GM12878 (cell line): ENCODE measurements at regions of chr5 and their contacts with region 1.

Region 1: DNA sequence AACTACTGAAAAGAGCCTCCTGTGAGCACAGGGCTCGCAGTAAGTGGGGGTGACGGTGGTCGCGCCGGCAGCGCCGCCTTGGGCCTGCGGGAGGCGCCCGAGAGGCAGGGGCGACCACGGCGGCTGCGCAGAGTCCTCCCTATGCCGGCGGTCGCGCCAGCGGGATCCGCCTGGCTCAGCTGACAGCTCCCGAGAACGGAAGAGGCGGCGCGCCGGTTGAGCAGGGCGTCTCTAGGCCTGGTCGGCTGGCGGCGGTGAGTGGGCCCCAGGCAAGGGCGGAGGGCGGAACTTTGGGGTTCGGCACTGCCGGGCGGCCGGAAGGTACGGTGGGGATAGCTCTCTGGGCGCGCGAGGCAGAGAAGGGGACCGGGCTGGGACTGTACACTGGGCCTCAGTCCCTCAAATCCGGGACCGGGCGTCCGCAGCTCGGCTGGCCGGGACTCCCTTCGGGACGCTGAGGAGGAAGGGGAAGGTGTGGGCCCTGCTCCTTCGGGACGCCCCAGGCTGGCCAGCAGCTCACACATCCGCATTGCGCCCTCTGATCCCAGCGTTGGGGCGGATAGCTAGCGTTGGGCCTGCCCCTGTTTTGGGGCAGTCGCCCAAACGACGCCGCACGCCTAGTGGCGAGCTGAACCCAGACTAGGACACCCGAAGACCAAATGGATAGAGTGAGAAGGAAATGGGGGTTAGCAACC is at the start of gene RNF14:
- DNase-seq: peak; percentile 74
- ATAC-seq: peak; percentile 95
- H3K4me3 ChIP-seq: peak within 1 kb of the TSS; percentile 73
- H3K27ac ChIP-seq: peak within 1 kb of the TSS; percentile 96
- H3K4me1 ChIP-seq: peaks cover 8% of the 10 kb centered on the region
- H3K27me3 ChIP-seq: no peaks in the 10 kb centered on the region
- CTCF ChIP-seq: peak; percentile 84 to 98 (median 95)
- EP300 ChIP-seq: no peak
- POLR2A ChIP-seq: peak; percentile 97
- RAD21 ChIP-seq: no peak
- polyA plus RNA-seq, gene RNF14: 28.1 to 34.4 TPM

Region 2: DNA sequence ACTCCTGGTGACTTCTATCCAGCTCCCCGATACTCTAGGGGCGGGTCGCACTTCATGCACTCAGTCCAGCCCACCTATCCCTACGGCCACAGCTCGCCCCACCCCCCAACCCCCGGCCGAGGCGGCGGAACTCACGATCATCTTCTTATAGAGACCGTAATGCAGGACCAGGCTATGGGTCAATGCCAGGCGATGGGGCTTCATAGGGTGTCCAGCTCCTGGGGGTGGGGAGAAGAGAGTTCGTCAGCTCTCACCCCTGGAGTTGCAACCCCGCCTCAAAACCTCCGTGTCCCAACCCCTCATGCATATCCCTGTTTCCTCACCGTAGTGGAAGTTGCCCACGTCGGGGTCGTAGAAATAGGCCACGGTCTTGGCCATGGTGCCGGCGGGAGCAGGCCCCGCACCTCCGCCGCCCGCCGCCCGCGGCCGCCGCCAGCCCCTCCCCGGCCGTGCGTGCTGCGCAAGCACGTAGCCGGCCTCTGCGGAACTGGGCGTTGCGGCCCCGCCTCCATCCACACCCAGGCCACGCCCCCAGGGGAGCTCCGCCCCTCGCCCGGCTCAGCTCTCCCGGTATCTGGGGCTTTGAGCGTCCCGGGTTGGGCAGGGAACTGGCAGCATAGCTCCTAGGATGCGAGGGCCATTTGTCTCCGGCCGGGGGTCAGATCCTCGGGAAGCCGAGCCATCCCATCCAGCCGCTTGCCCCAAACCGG is 332.5 kb before region 1 on chr5 and contains the starts of genes HDAC3 and RELL2:
- CTCF ChIA-PET with region 1: interaction called, 5 read pairs
- POLR2A ChIA-PET with region 1: interaction called, 10 read pairs
- RAD21 ChIA-PET with region 1: interaction called, 6 read pairs
- SMC1A ChIA-PET with region 1: no interaction called
- in situ Hi-C with region 1: no loop called
- intact Hi-C with region 1: no loop called
- DNase-seq: no peak
- ATAC-seq: peak; percentile 86
- H3K4me3 ChIP-seq: peak within 1 kb of the TSS; percentile 85
- H3K27ac ChIP-seq: peak within 1 kb of the TSS; percentile 86
- H3K4me1 ChIP-seq: peaks cover 41% of the 10 kb centered on the region
- H3K27me3 ChIP-seq: no peaks in the 10 kb centered on the region
- CTCF ChIP-seq: no peak
- EP300 ChIP-seq: no peak
- POLR2A ChIP-seq: peak; percentile 72
- RAD21 ChIP-seq: no peak
- polyA plus RNA-seq, gene HDAC3: 62.2 to 108 TPM
- polyA plus RNA-seq, gene RELL2: 0.23 to 0.64 TPM

Region 3: GRCh38 chr5:141664732-141665461 is 304.2 kb before region 1 on chr5:
- CTCF ChIA-PET with region 1: interaction called, 12 read pairs
- POLR2A ChIA-PET with region 1: no interaction called
- RAD21 ChIA-PET with region 1: no interaction called
- SMC1A ChIA-PET with region 1: no interaction called
- in situ Hi-C with region 1: no loop called
- intact Hi-C with region 1: loop called (anchors 10 kb)
- DNase-seq: peak; percentile 31
- ATAC-seq: peak; percentile 100
- H3K4me3 ChIP-seq: no peak overlapping the region
- H3K27ac ChIP-seq: no peak overlapping the region
- H3K4me1 ChIP-seq: no peaks in the 10 kb centered on the region
- H3K27me3 ChIP-seq: no peaks in the 10 kb centered on the region
- CTCF ChIP-seq: peak; percentile 92 to 96 (median 94)
- EP300 ChIP-seq: no peak
- POLR2A ChIP-seq: no peak
- RAD21 ChIP-seq: peak; percentile 84

Region 4: DNA sequence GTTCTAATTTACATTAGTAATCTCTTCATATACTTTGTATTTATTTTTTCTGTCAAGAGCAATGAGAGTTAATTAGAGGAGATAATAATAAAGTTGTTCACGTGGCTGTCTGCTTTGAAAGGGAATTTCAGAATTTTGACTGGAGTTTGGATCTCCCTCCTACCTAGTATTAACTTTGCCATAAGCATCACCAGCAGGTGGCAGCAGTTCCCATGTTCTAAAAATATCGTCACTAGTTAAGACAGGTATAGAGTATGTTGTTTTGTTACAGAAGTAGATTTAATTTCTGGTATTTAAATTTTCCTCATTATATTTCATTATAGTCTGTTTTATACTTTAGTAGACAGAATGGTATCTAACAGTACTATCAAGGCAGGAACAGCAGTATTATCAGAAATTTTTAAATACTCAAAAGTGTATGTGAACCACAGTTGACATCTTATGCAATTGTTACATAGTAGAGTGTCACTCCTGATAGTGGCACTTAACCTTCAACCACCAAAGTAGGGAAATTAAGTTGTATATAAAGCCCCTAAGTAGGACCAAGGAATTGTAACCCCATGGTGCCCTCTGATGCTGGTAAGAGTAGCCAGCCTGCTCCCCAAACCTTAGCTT is 23.4 kb after region 1 on chr5:
- CTCF ChIA-PET with region 1: interaction called, 46 read pairs
- POLR2A ChIA-PET with region 1: interaction called, 7 read pairs
- RAD21 ChIA-PET with region 1: interaction called, 15 read pairs
- SMC1A ChIA-PET with region 1: interaction called, 35 read pairs
- in situ Hi-C with region 1: no loop called
- intact Hi-C with region 1: no loop called
- DNase-seq: no peak
- ATAC-seq: peak; percentile 83
- H3K4me3 ChIP-seq: no peak overlapping the region
- H3K27ac ChIP-seq: no peak overlapping the region
- H3K4me1 ChIP-seq: no peaks in the 10 kb centered on the region
- H3K27me3 ChIP-seq: no peaks in the 10 kb centered on the region
- CTCF ChIP-seq: peak; percentile 60 to 71 (median 64)
- EP300 ChIP-seq: no peak
- POLR2A ChIP-seq: no peak
- RAD21 ChIP-seq: peak; percentile 64